Esophagus muscularis mucosa (tissue), 4 donors: ENCODE measurements at regions of chr19 and their contacts with region 1.

Region 1: DNA sequence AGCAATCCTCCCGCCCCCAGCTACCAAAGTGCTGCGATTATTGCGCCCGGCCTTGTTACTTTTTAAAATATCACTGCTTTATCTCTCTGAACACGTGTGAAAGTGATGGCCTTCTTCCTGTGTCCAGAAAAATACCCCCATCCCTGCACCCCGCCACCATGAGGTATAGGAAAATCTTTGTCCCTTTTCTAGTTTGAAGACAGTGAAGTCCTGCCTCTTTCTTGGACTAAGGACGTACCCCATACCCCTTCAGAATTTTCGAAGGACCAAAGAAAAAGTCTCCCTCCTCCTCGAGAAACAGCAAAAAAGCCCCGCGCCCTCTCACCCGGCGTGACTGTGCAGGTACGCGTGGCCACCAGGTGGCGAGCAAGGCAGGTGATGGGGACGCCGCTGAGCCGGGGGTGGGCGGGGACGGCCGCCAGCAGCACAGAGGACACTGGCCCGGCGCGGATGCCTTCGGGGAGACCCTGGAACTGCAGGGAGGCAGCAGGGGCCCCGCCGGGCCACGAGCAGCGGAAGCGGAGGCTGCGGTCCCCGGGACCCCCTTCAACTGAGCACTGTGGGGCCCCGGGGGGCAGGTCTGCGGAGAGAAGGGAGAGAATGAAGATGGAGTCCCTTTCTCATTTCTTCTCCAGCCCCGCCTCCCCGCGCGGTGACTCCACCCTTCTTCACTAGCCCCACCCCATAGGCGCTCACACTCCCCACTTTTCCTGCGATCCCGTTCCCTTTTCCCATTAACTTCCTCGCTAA is 3.2 kb downstream of the VSIG10L start:
- DNase-seq: peak; percentile 97
- H3K4me3 ChIP-seq: peak overlapping the region; percentile 57 to 76 (median 73)
- H3K27ac ChIP-seq: peak overlapping the region; percentile 84 to 92 (median 88)
- H3K4me1 ChIP-seq: peaks cover 6 to 45% (median 24%) of the 10 kb centered on the region in 4 donors
- H3K27me3 ChIP-seq: no peaks in the 10 kb centered on the region
- CTCF ChIP-seq: peak; percentile 84 to 94 (median 93)
- EP300 ChIP-seq: no peak
- POLR2A ChIP-seq: no peak

Region 2: GRCh38 chr19:51282335-51282734 is 56.4 kb before region 1 on chr19:
- intact Hi-C with region 1: no loop called
- DNase-seq: no peak
- H3K4me3 ChIP-seq: no peak overlapping the region
- H3K27ac ChIP-seq: no peak overlapping the region
- H3K4me1 ChIP-seq: no peaks in the 10 kb centered on the region
- H3K27me3 ChIP-seq: peaks cover 0 to 37% (median 0%) of the 10 kb centered on the region in 4 donors
- CTCF ChIP-seq: no peak
- EP300 ChIP-seq: no peak
- POLR2A ChIP-seq: no peak

Region 3: DNA sequence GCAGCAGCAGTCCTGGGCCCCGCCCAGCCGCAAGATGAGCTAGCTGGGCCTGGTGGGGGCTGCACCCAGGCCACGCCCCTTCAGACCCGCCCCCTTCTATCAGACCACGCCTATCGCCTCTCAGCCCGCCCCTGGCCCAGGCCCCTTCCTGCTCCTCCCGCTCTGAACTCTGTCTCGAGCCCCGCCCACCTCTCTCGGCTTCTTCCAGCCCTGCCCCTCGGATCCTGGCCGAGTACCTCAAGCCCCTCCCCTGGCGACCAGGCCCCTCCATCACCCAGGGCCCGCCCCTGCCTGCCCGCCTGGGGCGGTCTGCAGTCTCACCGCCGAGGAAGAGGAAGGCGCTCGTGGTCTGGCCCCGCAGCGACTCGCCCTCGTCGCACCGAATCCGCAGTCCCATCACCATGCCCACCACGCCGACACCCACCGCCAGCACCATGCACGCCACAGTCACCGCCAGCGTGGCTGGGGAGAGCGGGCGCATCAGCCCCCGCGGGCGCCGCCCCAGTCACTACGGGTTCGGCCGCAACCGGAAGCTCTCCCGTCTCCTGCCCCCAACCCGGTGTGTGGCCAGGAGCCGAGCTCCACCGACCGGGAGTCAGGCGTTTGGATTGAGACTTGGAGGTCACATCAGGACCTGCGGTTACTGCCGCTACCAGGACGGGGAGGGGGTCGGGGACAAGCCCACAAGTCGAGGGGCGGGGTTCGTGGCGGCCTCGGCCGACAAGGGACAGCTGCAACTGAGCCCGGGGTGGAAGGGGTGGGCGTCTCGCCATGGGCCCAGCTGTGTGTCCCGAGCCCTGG is 29.0 kb after region 1 on chr19:
- intact Hi-C with region 1: loop called (anchors 1 kb)
- DNase-seq: peak; percentile 99
- H3K4me3 ChIP-seq: peak overlapping the region; percentile 67 to 86 (median 75)
- H3K27ac ChIP-seq: peak overlapping the region; percentile 95 to 99 (median 97)
- H3K4me1 ChIP-seq: peaks cover 26 to 45% (median 43%) of the 10 kb centered on the region in 4 donors
- H3K27me3 ChIP-seq: no peaks in the 10 kb centered on the region
- CTCF ChIP-seq: peak in 1 of 3 experiments; percentile 14
- EP300 ChIP-seq: no peak
- POLR2A ChIP-seq: no peak

Region 4: GRCh38 chr19:51393959-51394836 is 55.5 kb after region 1 on chr19:
- intact Hi-C with region 1: loop called (anchors 5 kb)
- DNase-seq: peak; percentile 98
- H3K4me3 ChIP-seq: peak overlapping the region; percentile 45 to 59 (median 48)
- H3K27ac ChIP-seq: peak overlapping the region; percentile 69 to 81 (median 78)
- H3K4me1 ChIP-seq: peaks cover 9 to 14% (median 13%) of the 10 kb centered on the region in 4 donors
- H3K27me3 ChIP-seq: no peaks in the 10 kb centered on the region
- CTCF ChIP-seq: no peak
- EP300 ChIP-seq: no peak
- POLR2A ChIP-seq: no peak

Region 5: GRCh38 chr19:51407511-51408131 is 68.9 kb after region 1 on chr19:
- intact Hi-C with region 1: loop called (anchors 5 kb)
- DNase-seq: no peak
- H3K4me3 ChIP-seq: no peak overlapping the region
- H3K27ac ChIP-seq: no peak overlapping the region
- H3K4me1 ChIP-seq: no peaks in the 10 kb centered on the region
- H3K27me3 ChIP-seq: peaks cover 0 to 43% (median 0%) of the 10 kb centered on the region in 4 donors
- CTCF ChIP-seq: peak; percentile 42 to 57 (median 51)
- EP300 ChIP-seq: no peak
- POLR2A ChIP-seq: no peak

Region 6: DNA sequence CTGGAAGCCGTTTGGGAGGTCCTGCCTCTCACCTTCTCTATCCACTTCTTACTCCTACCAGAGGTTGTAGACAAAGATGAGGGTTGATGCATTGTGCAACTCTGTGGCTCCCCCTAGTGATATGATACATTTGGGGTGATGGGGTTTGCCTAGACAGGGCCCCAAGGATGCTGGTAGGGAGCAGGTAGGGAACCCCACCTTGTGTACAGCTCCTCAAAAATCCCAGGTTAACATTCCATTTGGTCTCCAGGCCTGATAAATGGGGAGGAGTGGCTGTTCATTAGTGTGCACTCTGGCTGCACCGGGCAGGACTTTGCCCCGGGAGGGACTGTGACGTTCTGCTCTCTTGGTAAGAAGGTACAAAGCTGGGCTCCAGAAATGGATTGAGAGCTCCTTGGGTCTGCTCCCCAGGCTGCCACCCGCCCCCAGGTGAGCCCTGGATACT is 100.3 kb after region 1 on chr19:
- intact Hi-C with region 1: loop called (anchors 2 kb)
- DNase-seq: no peak
- H3K4me3 ChIP-seq: no peak overlapping the region
- H3K27ac ChIP-seq: no peak overlapping the region
- H3K4me1 ChIP-seq: no peaks in the 10 kb centered on the region
- H3K27me3 ChIP-seq: peaks cover 0 to 86% (median 0%) of the 10 kb centered on the region in 4 donors
- CTCF ChIP-seq: peak in 2 of 3 experiments; percentile 42 to 46
- EP300 ChIP-seq: no peak
- POLR2A ChIP-seq: no peak

Region 7: DNA sequence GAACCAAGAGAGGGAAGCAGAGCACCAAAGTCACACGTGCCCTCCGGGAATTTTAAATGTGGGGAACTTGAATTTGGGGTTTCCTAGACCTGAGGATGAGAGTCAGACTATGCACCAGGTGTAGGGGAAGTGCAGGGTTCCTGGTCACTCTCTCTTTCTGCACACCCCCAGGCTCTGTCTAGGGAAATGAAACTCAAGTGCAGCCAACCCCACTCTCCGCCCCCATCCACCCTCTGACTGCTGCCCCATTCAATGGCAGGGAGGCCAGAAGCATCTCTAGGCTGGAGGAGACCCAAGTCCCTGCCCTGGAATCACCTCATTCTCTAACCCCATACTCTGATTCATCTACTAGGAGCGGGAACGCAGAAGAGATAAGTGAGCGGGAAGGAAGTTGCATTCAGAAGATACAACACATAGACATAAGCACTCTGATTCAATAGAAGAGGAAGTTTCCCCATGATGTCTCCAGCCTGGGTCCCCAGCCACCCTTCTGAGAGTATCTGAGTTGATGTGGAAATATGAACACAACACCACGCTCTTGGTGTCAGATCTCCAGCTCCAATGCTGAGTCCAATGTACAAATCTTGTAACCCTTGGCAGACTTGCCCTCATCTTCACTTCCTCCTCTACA is 312.6 kb after region 1 on chr19:
- intact Hi-C with region 1: loop called (anchors 10 kb)
- DNase-seq: no peak
- H3K4me3 ChIP-seq: no peak overlapping the region
- H3K27ac ChIP-seq: no peak overlapping the region
- H3K4me1 ChIP-seq: no peaks in the 10 kb centered on the region
- H3K27me3 ChIP-seq: peaks cover 0 to 30% (median 0%) of the 10 kb centered on the region in 4 donors
- CTCF ChIP-seq: no peak
- EP300 ChIP-seq: no peak
- POLR2A ChIP-seq: no peak

Region 8: GRCh38 chr19:51688672-51689571 is 350.2 kb after region 1 on chr19:
- intact Hi-C with region 1: loop called (anchors 10 kb)
- DNase-seq: peak; percentile 97
- H3K4me3 ChIP-seq: peak overlapping the region; percentile 86 to 100 (median 98)
- H3K27ac ChIP-seq: peak overlapping the region; percentile 99 to 100 (median 100)
- H3K4me1 ChIP-seq: peaks cover 42 to 49% (median 48%) of the 10 kb centered on the region in 4 donors
- H3K27me3 ChIP-seq: no peaks in the 10 kb centered on the region
- CTCF ChIP-seq: peak in 1 of 3 experiments; percentile 9
- EP300 ChIP-seq: no peak
- POLR2A ChIP-seq: no peak